Activated naive CD4-positive, alpha-beta T cell treated with anti-CD3 and anti-CD28 coated beads for 36 hours (primary cell): ENCODE measurements at regions of chrX and their contacts with region 1.

Region 1: GRCh38 chrX:119693040-119693995 is at the start of gene SEPTIN6:
- DNase-seq: peak; percentile 86
- H3K4me3 Mint-ChIP-seq: peak within 1 kb of the TSS; percentile 95
- H3K27ac Mint-ChIP-seq: peak within 1 kb of the TSS; percentile 100
- H3K4me1 Mint-ChIP-seq: peaks cover 10% of the 10 kb centered on the region
- H3K27me3 Mint-ChIP-seq: no peaks in the 10 kb centered on the region
- total RNA-seq, gene SEPTIN6: 137 to 143 TPM

Region 2: GRCh38 chrX:119359618-119360382 is 333.5 kb before region 1 on chrX:
- CTCF ChIA-PET with region 1: no interaction called
- intact Hi-C with region 1: no loop called
- DNase-seq: no peak
- H3K4me3 Mint-ChIP-seq: no peak overlapping the region
- H3K27ac Mint-ChIP-seq: no peak overlapping the region
- H3K4me1 Mint-ChIP-seq: no peaks in the 10 kb centered on the region
- H3K27me3 Mint-ChIP-seq: no peaks in the 10 kb centered on the region

Region 3: GRCh38 chrX:119516157-119516702 is 177.1 kb before region 1 on chrX:
- CTCF ChIA-PET with region 1: interaction called, 3 read pairs
- intact Hi-C with region 1: loop called (anchors 1 kb)
- DNase-seq: peak; percentile 45
- H3K4me3 Mint-ChIP-seq: no peak overlapping the region
- H3K27ac Mint-ChIP-seq: no peak overlapping the region
- H3K4me1 Mint-ChIP-seq: no peaks in the 10 kb centered on the region
- H3K27me3 Mint-ChIP-seq: no peaks in the 10 kb centered on the region

Region 4: GRCh38 chrX:119574394-119575266 is 118.7 kb before region 1 on chrX and contains the start of gene UBE2A:
- CTCF ChIA-PET with region 1: no interaction called
- intact Hi-C with region 1: loop called (anchors 2 kb)
- DNase-seq: peak; percentile 89
- H3K4me3 Mint-ChIP-seq: peak within 1 kb of the TSS; percentile 91
- H3K27ac Mint-ChIP-seq: peak within 1 kb of the TSS; percentile 89
- H3K4me1 Mint-ChIP-seq: peaks cover 12% of the 10 kb centered on the region
- H3K27me3 Mint-ChIP-seq: no peaks in the 10 kb centered on the region
- total RNA-seq, gene UBE2A: 46.1 to 49.8 TPM

Region 5: GRCh38 chrX:119647552-119648420 is 45.5 kb before region 1 on chrX:
- CTCF ChIA-PET with region 1: interaction called, 3 read pairs
- intact Hi-C with region 1: loop called (anchors 1 kb)
- DNase-seq: peak; percentile 84
- H3K4me3 Mint-ChIP-seq: no peak overlapping the region
- H3K27ac Mint-ChIP-seq: peak overlapping the region; percentile 89
- H3K4me1 Mint-ChIP-seq: peaks cover 32% of the 10 kb centered on the region
- H3K27me3 Mint-ChIP-seq: no peaks in the 10 kb centered on the region

Region 6: DNA sequence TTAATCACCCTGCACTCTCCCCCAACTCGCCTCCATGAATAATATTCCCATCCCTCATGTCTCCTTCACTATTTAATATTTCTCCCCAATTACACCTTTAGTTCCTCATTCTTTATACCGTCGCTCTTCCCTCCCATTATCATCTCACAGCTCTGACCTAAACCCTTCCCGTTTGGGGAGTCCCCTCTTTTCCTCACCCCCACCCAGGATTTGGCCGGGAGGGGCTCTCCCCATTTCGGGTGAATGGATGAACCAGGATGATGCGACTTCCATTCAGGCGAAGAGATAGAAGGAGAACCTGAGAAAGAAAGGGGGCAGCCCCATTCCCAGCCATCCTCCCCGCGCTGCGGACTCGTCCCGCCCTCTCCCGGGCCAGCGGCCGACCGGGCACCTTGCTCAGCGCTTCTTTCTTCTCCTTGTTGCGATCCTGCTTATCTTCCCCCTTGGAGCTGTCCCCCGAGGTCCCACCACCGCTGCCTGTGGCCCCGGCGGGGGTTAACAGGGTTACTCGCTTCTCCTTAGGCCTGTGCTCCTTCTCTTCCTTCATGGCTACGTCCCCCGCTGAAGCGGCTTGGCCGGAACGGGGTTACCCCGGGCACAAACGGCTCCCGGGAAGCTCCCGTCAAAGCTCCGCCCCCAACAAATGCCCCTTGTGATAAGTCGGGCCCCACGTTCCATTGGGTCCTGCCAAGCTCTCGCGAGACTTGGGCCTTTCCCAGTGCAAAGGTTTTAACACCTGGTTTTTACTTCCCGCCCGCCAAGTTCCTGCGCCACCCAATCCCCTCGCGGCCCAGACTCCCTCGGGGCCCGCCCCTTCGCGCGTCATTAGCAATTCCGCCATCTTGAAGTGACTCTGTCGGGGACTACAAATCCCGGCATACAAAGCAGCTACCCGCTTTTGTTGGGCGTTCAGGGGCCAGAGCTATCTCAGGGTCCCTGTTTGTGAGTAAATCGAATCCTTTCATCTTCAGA is 159.3 kb after region 1 on chrX and contains the start of gene UPF3B:
- CTCF ChIA-PET with region 1: no interaction called
- intact Hi-C with region 1: loop called (anchors 1 kb)
- DNase-seq: peak; percentile 97
- H3K4me3 Mint-ChIP-seq: peak within 1 kb of the TSS; percentile 98
- H3K27ac Mint-ChIP-seq: peak within 1 kb of the TSS; percentile 97
- H3K4me1 Mint-ChIP-seq: peaks cover 8% of the 10 kb centered on the region
- H3K27me3 Mint-ChIP-seq: no peaks in the 10 kb centered on the region
- total RNA-seq, gene UPF3B: 21.5 to 22.2 TPM

Region 7: GRCh38 chrX:119871599-119872395 is 178.5 kb after region 1 on chrX and contains the starts of genes NDUFA1 and RNF113A:
- CTCF ChIA-PET with region 1: no interaction called
- intact Hi-C with region 1: loop called (anchors 1 kb)
- DNase-seq: peak; percentile 86
- H3K4me3 Mint-ChIP-seq: peak within 1 kb of the TSS; percentile 97
- H3K27ac Mint-ChIP-seq: peak within 1 kb of the TSS; percentile 98
- H3K4me1 Mint-ChIP-seq: peaks cover 13% of the 10 kb centered on the region
- H3K27me3 Mint-ChIP-seq: no peaks in the 10 kb centered on the region
- total RNA-seq, gene NDUFA1: 105 to 107 TPM
- total RNA-seq, gene RNF113A: 20.8 to 22.0 TPM

Region 8: DNA sequence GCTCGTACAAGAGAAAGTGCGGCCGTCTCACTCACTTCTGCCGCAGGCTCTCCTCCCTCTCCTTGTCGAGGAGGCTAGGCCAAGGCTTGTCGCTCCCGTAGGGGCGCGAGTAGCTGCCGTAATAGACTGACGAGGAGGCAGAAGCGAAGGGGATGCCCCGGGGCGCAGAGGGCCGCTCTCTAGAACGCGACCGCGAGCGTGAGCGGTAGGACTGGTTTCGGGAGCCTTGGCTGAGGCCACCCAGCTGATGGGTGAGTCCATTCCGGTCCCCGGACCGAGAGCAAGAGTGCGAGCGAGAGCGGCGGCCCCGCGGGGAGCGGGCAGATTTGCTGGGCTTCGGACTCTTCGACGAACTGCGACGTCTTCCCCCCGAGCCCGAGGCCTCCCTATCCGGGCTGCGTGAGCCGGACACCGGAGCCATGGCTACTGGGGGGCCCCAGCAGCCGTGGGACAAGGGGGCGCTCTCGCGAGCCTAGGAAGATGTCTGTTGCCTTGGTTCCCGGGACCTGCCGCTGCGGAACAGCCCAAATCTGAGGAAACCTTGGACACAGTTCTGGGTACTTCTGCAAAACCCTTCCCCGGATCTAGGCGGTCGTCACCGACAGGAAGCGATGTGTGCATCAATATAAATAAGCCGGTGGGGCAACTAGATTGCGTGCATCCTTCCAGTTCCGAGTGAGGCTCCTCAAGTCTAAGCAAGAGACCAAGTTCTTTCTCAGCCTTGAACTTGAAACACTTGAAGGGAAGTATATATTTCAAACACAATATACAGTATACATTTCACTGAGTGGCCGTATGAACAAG is 250.1 kb after region 1 on chrX and contains the start of gene NKAP:
- CTCF ChIA-PET with region 1: no interaction called
- intact Hi-C with region 1: loop called (anchors 1 kb)
- DNase-seq: peak; percentile 86
- H3K4me3 Mint-ChIP-seq: peak within 1 kb of the TSS; percentile 98
- H3K27ac Mint-ChIP-seq: peak within 1 kb of the TSS; percentile 95
- H3K4me1 Mint-ChIP-seq: peaks cover 23% of the 10 kb centered on the region
- H3K27me3 Mint-ChIP-seq: no peaks in the 10 kb centered on the region
- total RNA-seq, gene NKAP: 12.3 to 12.7 TPM